CD4-positive, alpha-beta T cell (primary cell): ENCODE measurements at regions of chr3 and their contacts with region 1.

Region 1: DNA sequence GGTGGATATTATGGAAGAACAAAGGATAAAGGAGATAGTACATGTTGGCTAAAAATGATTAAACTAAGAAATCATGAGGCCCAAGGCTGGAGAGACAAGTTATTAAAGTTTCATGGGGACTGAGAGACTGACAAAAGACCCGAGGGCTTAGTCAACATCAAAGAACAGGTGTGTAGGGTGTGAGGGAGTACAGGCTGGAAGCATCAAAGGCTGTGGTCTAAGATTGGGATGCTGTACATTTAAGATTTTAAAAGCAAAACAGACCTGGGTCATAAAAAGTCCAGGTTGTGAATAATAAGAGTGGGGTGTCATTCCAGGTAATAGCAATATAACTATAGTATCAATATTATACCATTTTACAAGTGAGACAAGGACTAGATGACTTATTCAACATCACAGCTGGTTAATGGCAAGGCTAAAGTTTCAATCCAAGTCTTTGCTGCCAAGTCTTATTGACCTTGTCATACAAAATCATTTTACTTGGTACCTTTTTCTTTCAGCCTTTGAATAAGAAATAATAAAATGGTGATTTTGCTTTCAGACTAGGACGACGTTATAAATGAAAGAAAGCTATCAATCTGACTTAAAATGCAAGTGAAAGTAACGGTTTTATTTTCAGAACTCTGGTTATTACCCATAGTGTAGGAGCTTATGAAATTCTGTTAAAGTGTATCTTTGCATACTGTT is 211.6 kb downstream of the TNIK start:
- DNase-seq: peak in 1 of 14 experiments; percentile 57
- ATAC-seq: peak; percentile 37
- H3K4me3 ChIP-seq: peak overlapping the region; percentile 21
- H3K4me3 Mint-ChIP-seq: no peak overlapping the region
- H3K27ac ChIP-seq: peak overlapping the region in 1 of 2 donors; percentile 25
- H3K27ac Mint-ChIP-seq: no peak overlapping the region
- H3K4me1 ChIP-seq: peaks cover 54% of the 10 kb centered on the region
- H3K4me1 Mint-ChIP-seq: peaks cover 17% of the 10 kb centered on the region
- H3K27me3 ChIP-seq: no peaks in the 10 kb centered on the region
- H3K27me3 Mint-ChIP-seq: no peaks in the 10 kb centered on the region
- CTCF ChIP-seq: no peak

Region 2: DNA sequence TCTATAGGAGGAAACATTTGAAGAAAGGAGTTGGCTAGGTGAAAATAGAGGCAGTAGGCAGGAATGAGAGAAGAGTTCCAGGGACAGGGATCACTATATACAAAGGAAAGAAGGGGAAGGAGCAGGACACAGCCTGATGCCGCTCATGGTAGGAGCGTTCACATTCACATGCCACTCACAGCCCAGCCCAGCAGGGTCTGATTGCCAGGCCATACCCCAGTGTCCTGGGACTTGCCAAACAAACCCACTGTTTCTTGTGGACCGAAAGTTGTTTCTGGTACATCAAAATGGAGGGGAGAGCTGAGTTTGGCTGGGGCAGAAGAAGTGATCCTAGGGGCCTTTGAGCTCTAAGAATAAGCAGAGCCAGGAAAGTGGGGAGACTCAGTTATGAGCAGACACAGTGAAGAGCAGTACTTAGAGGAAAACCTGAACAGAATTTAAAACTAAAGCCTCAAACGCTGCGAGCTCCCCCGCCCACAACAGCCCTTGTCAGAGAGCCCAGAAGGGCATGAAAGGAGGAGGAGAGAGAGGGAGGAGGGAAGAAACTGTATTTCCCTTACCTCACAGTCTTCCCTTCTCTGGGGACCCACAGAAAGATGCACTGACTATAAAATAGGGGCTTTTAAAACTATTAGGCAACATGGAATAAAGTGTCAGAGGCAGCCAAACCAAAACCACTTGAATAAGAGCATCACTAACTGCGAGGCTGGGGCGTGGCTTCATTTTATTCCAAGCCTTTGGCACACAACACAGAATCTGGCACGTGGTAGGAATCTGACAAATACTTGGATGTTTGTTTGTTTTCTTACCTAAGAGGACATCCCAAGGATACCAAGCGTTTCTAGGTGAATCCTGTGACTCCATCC is 507.6 kb before region 1 on chr3:
- CTCF ChIA-PET with region 1: no interaction called
- POLR2A ChIA-PET with region 1: no interaction called
- intact Hi-C with region 1: no loop called
- DNase-seq: no peak
- ATAC-seq: no peak
- H3K4me3 ChIP-seq: no peak overlapping the region
- H3K4me3 Mint-ChIP-seq: no peak overlapping the region
- H3K27ac ChIP-seq: no peak overlapping the region
- H3K27ac Mint-ChIP-seq: no peak overlapping the region
- H3K4me1 ChIP-seq: no peaks in the 10 kb centered on the region
- H3K4me1 Mint-ChIP-seq: no peaks in the 10 kb centered on the region
- H3K27me3 ChIP-seq: peaks cover 0 to under 1% of the 10 kb centered on the region in 2 experiments
- H3K27me3 Mint-ChIP-seq: peaks cover 12% of the 10 kb centered on the region
- CTCF ChIP-seq: no peak

Region 3: GRCh38 chr3:170908235-170909116 is 340.1 kb before region 1 on chr3 and contains the start of gene EIF5A2:
- CTCF ChIA-PET with region 1: no interaction called
- POLR2A ChIA-PET with region 1: no interaction called
- intact Hi-C with region 1: loop called in 1 of 2 experiments (anchors 10 kb)
- DNase-seq: peak; percentile 92 to 98 (median 94)
- ATAC-seq: peak; percentile 94
- H3K4me3 ChIP-seq: peak within 1 kb of the TSS; percentile 66
- H3K4me3 Mint-ChIP-seq: peak within 1 kb of the TSS; percentile 99
- H3K27ac ChIP-seq: peak within 1 kb of the TSS; percentile 53 to 66
- H3K27ac Mint-ChIP-seq: peak within 1 kb of the TSS; percentile 86
- H3K4me1 ChIP-seq: peaks cover 10% of the 10 kb centered on the region
- H3K4me1 Mint-ChIP-seq: peaks cover 27% of the 10 kb centered on the region
- H3K27me3 ChIP-seq: no peaks in the 10 kb centered on the region
- H3K27me3 Mint-ChIP-seq: no peaks in the 10 kb centered on the region
- CTCF ChIP-seq: no peak
- total RNA-seq, gene EIF5A2: 10.6 to 13.7 TPM

Region 4: DNA sequence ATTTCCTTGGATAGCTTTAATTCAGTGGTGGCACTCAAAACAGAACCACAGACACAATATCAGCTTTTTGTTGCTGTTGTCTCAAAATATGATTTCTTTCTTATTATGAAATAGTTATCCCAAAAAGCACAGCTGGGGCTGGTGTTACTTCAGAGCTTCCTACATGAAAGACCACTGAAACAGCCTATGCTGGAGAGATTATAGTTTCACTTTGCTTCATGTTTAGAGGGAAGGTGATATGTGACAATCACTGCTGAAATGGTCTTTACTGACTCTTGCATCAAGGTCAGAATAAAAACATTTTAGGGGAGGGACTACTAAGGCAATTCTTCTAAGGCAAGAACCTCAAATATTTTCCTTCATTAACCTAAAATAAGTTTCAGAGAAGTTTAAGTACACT is 21.0 kb after region 1 on chr3:
- CTCF ChIA-PET with region 1: interaction called, 7 read pairs
- POLR2A ChIA-PET with region 1: interaction called, 10 read pairs
- intact Hi-C with region 1: no loop called
- DNase-seq: peak in 1 of 14 experiments; percentile 67
- ATAC-seq: peak; percentile 64
- H3K4me3 ChIP-seq: peak overlapping the region; percentile 26
- H3K4me3 Mint-ChIP-seq: peak overlapping the region; percentile 26
- H3K27ac ChIP-seq: no peak overlapping the region
- H3K27ac Mint-ChIP-seq: peak overlapping the region; percentile 77
- H3K4me1 ChIP-seq: peaks cover 33% of the 10 kb centered on the region
- H3K4me1 Mint-ChIP-seq: peaks cover 91% of the 10 kb centered on the region
- H3K27me3 ChIP-seq: no peaks in the 10 kb centered on the region
- H3K27me3 Mint-ChIP-seq: no peaks in the 10 kb centered on the region
- CTCF ChIP-seq: no peak